ENCODE measurements at regions of chr11 and their contacts with region 1.

Region 1: DNA sequence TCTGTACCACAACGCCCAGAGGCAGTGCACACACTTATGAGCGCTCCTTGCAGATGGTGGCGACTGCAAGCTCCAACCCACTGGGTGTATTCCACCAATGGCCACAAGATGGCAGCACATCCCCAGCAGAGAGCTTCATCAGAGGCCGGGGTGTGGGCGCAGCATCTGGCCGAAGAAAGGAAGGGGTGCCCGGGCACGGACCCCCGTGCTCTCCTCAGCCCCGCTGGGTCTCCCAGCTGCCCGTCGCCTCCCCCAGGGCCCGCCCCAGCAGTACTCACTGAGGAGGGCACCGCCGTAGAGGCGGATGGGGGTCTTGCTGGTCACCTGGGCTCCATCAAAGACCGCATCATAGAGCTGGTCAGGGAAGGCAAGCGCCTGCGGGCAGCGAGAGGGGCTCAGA is 14.2 kb downstream of the TP53I11 start:
- DNase-seq: peak; percentile 81 to 89
- H3K4me3 ChIP-seq: no peak overlapping the region
- H3K4me3 Mint-ChIP-seq: no peak overlapping the region
- H3K27ac Mint-ChIP-seq: no peak overlapping the region
- H3K4me1 ChIP-seq: no peaks in the 10 kb centered on the region
- H3K4me1 Mint-ChIP-seq: no peaks in the 10 kb centered on the region
- H3K27me3 ChIP-seq: no peaks in the 10 kb centered on the region
- H3K27me3 Mint-ChIP-seq: no peaks in the 10 kb centered on the region
- CTCF ChIP-seq: peak; percentile 93 to 95

Region 2: DNA sequence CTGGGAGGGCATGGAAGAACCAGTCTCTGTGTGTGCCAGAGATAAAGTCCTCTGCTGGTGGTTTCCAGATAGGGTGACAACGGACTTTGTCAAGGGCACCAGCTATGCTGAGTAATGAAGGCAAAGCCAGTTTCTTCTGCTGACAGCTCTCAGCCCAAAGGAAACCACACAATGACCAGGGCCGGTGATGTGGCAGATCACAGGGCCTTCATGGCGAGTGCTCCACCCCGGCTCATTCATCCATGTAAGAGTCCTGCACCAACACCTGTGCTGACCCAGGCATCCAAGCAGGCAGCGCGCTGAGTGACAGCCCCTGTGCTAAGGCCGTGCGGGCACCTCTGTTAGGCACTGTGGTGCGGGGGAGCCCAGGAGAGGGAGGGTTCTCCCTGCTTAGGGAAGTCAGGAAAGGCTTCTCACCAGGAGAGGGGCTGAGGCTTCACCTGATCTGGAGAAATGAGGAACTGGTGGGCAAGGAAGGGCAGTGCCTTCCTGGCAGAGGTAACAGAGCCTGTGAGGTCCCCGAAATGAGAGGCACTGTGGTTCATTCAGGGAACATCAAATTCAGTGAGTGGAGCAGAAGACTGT is 19.6 kb before region 1 on chr11:
- CTCF ChIA-PET with region 1: no interaction called
- POLR2A ChIA-PET with region 1: no interaction called
- intact Hi-C with region 1: no loop called
- DNase-seq: no peak
- H3K4me3 ChIP-seq: no peak overlapping the region
- H3K4me3 Mint-ChIP-seq: no peak overlapping the region
- H3K27ac Mint-ChIP-seq: no peak overlapping the region
- H3K4me1 ChIP-seq: no peaks in the 10 kb centered on the region
- H3K4me1 Mint-ChIP-seq: peaks cover 7% of the 10 kb centered on the region
- H3K27me3 ChIP-seq: no peaks in the 10 kb centered on the region
- H3K27me3 Mint-ChIP-seq: no peaks in the 10 kb centered on the region
- CTCF ChIP-seq: no peak

Region 3: GRCh38 chr11:45017329-45017728 is 80.8 kb after region 1 on chr11:
- CTCF ChIA-PET with region 1: interaction called, 5 read pairs
- POLR2A ChIA-PET with region 1: no interaction called
- intact Hi-C with region 1: loop called (anchors 2 kb)
- DNase-seq: no peak
- H3K4me3 ChIP-seq: no peak overlapping the region
- H3K4me3 Mint-ChIP-seq: no peak overlapping the region
- H3K27ac Mint-ChIP-seq: no peak overlapping the region
- H3K4me1 ChIP-seq: no peaks in the 10 kb centered on the region
- H3K4me1 Mint-ChIP-seq: no peaks in the 10 kb centered on the region
- H3K27me3 ChIP-seq: no peaks in the 10 kb centered on the region
- H3K27me3 Mint-ChIP-seq: peaks cover 14% of the 10 kb centered on the region
- CTCF ChIP-seq: peak in 1 of 2 experiments; percentile 50

Region 4: GRCh38 chr11:45102810-45103621 is 166.5 kb after region 1 on chr11:
- CTCF ChIA-PET with region 1: interaction called, 168 read pairs
- POLR2A ChIA-PET with region 1: no interaction called
- intact Hi-C with region 1: loop called (anchors 1 kb)
- DNase-seq: peak in 1 of 2 experiments; percentile 68
- H3K4me3 ChIP-seq: no peak overlapping the region
- H3K4me3 Mint-ChIP-seq: no peak overlapping the region
- H3K27ac Mint-ChIP-seq: no peak overlapping the region
- H3K4me1 ChIP-seq: peaks cover 4% of the 10 kb centered on the region; the same call in 1 of the 2 replicates
- H3K4me1 Mint-ChIP-seq: no peaks in the 10 kb centered on the region
- H3K27me3 ChIP-seq: no peaks in the 10 kb centered on the region
- H3K27me3 Mint-ChIP-seq: peaks cover 21% of the 10 kb centered on the region
- CTCF ChIP-seq: peak; percentile 92 to 96

Region 5: DNA sequence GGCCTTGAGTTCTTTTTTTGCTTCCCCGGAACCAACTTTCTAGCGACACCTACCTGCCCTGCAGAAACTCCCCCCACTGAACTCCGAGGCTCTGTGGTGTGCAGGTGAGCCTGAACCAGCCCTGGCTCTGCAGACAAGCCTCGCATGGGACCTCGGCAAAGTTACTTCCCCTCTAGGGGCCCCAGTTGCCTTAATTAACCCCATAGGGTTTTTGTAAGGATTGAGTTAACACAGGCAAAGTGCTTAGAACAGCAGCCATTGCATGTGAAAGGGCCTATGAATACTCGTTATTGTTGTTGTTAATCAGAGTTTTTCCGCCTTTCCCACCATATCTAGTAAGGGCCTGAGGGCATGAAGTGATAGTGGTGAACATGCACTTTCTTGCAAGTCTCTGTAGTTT is 362.2 kb after region 1 on chr11:
- CTCF ChIA-PET with region 1: no interaction called
- POLR2A ChIA-PET with region 1: no interaction called
- intact Hi-C with region 1: loop called (anchors 10 kb)
- DNase-seq: no peak
- H3K4me3 ChIP-seq: no peak overlapping the region
- H3K4me3 Mint-ChIP-seq: no peak overlapping the region
- H3K27ac Mint-ChIP-seq: no peak overlapping the region
- H3K4me1 ChIP-seq: no peaks in the 10 kb centered on the region
- H3K4me1 Mint-ChIP-seq: peaks cover 6% of the 10 kb centered on the region
- H3K27me3 ChIP-seq: no peaks in the 10 kb centered on the region
- H3K27me3 Mint-ChIP-seq: no peaks in the 10 kb centered on the region
- CTCF ChIP-seq: no peak

Region 6: GRCh38 chr11:45500451-45500850 is 563.9 kb after region 1 on chr11:
- CTCF ChIA-PET with region 1: no interaction called
- POLR2A ChIA-PET with region 1: no interaction called
- intact Hi-C with region 1: no loop called
- DNase-seq: no peak
- H3K4me3 ChIP-seq: no peak overlapping the region
- H3K4me3 Mint-ChIP-seq: no peak overlapping the region
- H3K27ac Mint-ChIP-seq: no peak overlapping the region
- H3K4me1 ChIP-seq: no peaks in the 10 kb centered on the region
- H3K4me1 Mint-ChIP-seq: no peaks in the 10 kb centered on the region
- H3K27me3 ChIP-seq: no peaks in the 10 kb centered on the region
- H3K27me3 Mint-ChIP-seq: peaks cover 16% of the 10 kb centered on the region
- CTCF ChIP-seq: no peak